GM12878 (cell line): ENCODE measurements at regions of chr3 and their contacts with region 1.

Region 1: GRCh38 chr3:127750226-127751031 is 71.9 kb downstream of the MGLL start:
- DNase-seq: peak; percentile 88
- ATAC-seq: peak; percentile 58
- H3K4me3 ChIP-seq: peak overlapping the region; percentile 48; the same call in 1 of the 2 replicates
- H3K27ac ChIP-seq: peak overlapping the region; percentile 99
- H3K4me1 ChIP-seq: peaks cover 69% of the 10 kb centered on the region
- H3K27me3 ChIP-seq: no peaks in the 10 kb centered on the region
- CTCF ChIP-seq: no peak
- EP300 ChIP-seq: peak; percentile 83 to 87
- POLR2A ChIP-seq: no peak
- RAD21 ChIP-seq: 0 out of 2 replicates have a peak, but pooled peaks have one; percentile 11

Region 2: DNA sequence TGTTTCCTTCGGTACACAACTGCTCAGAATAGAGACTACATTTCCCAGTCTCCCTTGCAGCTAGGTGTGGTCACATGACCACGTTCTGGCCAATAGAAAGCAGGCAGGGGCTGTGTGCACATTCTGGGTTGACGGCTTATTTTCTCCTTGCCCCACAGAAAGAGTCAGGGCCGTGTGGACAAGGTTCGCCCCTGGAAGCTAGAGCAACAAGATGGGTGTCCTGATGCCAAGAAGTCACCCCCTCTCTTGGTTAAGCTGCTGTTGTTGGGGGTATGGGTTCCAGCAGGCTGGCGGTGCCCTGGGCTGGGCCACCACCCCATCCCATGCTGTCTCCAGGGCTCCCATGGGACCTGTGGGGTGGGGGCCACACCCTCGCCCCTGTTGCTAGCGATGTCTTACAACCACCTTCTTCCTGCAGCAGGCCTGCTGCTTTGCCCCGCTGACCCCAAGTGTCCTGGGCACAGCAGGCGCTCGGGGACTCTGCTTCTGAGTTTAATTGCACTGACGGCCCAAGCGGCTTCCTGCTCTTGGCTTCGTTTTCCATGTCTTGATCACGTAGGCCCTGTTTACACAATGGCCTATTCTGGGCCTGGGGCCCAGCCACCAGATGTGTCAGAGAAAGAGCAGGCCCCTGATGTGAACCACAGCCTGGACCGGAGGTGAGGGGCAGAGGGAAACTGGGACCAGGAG is 52.7 kb before region 1 on chr3:
- CTCF ChIA-PET with region 1: interaction called, 5 read pairs
- POLR2A ChIA-PET with region 1: no interaction called
- RAD21 ChIA-PET with region 1: interaction called, 5 read pairs
- SMC1A ChIA-PET with region 1: interaction called, 5 read pairs
- in situ Hi-C with region 1: no loop called
- intact Hi-C with region 1: loop called (anchors 5 kb)
- DNase-seq: peak; percentile 48
- ATAC-seq: peak; percentile 94
- H3K4me3 ChIP-seq: no peak overlapping the region
- H3K27ac ChIP-seq: no peak overlapping the region; the same call in 1 of the 2 replicates
- H3K4me1 ChIP-seq: peaks cover 14% of the 10 kb centered on the region
- H3K27me3 ChIP-seq: no peaks in the 10 kb centered on the region
- CTCF ChIP-seq: no peak
- EP300 ChIP-seq: no peak
- POLR2A ChIP-seq: peak; percentile 46
- RAD21 ChIP-seq: no peak

Region 3: DNA sequence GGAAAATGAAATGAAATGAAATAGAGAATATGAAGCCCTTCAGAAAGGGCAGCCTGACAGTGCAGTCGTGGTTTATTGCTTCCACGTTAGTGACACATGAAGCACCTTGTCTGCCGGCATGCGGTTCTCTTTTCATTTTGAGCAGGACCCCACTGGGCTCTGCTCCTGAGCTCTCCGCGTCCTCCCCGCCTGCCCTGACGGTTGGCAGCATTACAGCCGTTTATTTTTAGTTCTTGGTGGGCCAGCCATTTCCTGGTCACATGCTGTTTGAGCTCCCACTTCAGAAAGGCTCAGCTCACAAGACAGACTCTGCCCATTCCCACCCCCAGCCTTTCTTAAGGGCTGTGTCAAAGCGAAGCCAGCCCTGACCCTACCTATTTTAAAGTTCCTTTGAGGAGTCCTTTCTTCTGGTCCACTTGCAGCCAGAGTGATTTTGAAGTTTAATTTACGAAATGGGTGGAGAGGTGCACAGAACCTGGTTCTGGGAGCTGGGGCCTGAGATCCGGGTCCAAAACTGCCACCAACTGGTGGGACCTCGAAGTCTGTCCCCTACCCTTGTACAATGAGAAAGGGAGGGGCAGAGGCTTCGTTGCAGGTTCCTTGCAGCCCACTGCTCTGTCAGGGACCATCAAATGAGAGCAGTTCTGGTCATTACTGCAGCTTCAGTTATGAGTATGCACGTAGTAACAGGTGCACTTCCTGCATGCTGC is 11.8 kb after region 1 on chr3:
- CTCF ChIA-PET with region 1: interaction called, 19 read pairs
- POLR2A ChIA-PET with region 1: interaction called, 116 read pairs
- RAD21 ChIA-PET with region 1: interaction called, 149 read pairs
- SMC1A ChIA-PET with region 1: interaction called, 205 read pairs
- in situ Hi-C with region 1: no loop called
- intact Hi-C with region 1: loop called (anchors 2 kb)
- DNase-seq: peak; percentile 56
- ATAC-seq: peak; percentile 75
- H3K4me3 ChIP-seq: peak overlapping the region; percentile 62
- H3K27ac ChIP-seq: peak overlapping the region; percentile 96
- H3K4me1 ChIP-seq: peaks cover 64% of the 10 kb centered on the region
- H3K27me3 ChIP-seq: no peaks in the 10 kb centered on the region
- CTCF ChIP-seq: no peak
- EP300 ChIP-seq: peak; percentile 20 to 26; a peak in 1 of 4 replicates
- POLR2A ChIP-seq: peak; percentile 69
- RAD21 ChIP-seq: peak; percentile 13; the same call in 1 of the 2 replicates

Region 4: DNA sequence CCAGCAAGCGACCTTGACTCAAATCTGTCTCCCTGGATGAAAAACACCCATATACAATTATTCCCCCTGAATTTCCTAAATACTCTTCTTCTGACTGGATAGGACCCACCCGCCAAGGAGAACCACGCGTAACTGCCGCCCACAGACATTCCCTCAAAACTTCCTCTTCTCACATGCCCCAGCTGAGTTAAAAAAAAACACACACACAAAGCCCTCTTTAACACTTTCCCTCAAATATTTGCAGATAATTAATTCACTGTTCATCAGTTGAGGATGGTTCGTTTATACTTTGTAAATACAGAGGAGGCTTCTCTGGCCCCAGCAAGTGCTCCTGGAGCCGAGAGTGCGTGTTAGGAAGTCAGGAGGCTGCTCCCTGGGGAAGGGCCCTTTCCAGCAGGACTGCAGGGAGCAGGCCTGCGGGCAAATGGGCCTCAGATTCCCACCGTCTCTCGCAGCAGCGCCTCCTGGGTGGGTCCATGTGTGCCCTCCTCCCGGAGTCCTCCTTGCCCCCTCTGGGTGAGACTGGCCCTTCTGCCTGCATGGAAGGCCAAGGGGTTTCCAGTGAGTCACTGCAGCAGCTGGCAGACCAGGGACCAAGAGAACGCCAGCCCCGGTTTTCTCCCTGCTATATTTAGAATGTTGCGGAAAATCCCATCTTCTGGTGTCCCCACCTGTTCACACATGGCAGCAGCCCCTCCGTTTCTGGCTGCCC is 25.1 kb after region 1 on chr3:
- CTCF ChIA-PET with region 1: interaction called, 4 read pairs
- POLR2A ChIA-PET with region 1: interaction called, 14 read pairs
- RAD21 ChIA-PET with region 1: interaction called, 149 read pairs
- SMC1A ChIA-PET with region 1: interaction called, 205 read pairs
- in situ Hi-C with region 1: no loop called
- intact Hi-C with region 1: no loop called
- DNase-seq: no peak
- ATAC-seq: peak; percentile 79
- H3K4me3 ChIP-seq: peak overlapping the region; percentile 19; the same call in 1 of the 2 replicates
- H3K27ac ChIP-seq: peak overlapping the region; percentile 94
- H3K4me1 ChIP-seq: peaks cover 67% of the 10 kb centered on the region
- H3K27me3 ChIP-seq: no peaks in the 10 kb centered on the region
- CTCF ChIP-seq: no peak
- EP300 ChIP-seq: peak in 1 of 2 experiments; percentile 41; a peak in 2 of 4 replicates
- POLR2A ChIP-seq: no peak
- RAD21 ChIP-seq: no peak

Region 5: DNA sequence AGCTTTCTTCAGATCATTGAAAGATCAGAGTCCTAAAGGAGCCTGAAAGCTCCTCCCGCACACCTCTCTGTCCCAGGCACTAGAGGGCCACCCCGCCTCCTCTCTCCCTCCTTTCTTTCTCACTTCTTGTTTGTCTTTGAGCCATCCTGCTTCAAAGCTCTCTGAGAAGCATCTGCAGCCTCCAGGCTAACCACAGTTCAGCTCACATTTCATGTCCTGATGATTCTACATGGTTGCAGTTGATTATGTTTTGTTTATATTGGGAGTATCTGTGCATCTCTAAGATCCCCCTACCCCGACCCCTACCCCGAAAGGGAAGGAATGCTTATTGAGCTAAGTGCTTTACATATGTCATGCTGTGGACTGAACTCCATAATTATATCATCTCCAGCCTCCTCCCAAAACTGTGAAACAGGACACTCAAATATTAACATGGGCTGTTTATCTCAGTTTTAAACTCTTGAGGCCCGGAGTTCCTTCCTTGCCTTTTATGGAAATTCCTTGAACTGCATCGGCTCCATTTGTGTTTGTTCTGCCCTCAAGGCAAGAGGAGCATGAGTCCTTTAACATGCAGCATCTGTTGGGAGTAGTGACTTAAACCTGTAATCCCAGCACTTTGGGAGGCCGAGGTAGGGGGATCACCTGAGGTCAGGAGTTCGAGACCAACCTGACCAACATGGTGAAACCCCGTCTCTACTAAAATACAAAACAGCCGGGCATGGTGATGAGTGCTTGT is 41.0 kb after region 1 on chr3:
- CTCF ChIA-PET with region 1: interaction called, 13 read pairs
- POLR2A ChIA-PET with region 1: interaction called, 7 read pairs
- RAD21 ChIA-PET with region 1: interaction called, 13 read pairs
- SMC1A ChIA-PET with region 1: interaction called, 28 read pairs
- in situ Hi-C with region 1: no loop called
- intact Hi-C with region 1: no loop called
- DNase-seq: peak; percentile 41
- ATAC-seq: peak; percentile 99
- H3K4me3 ChIP-seq: no peak overlapping the region
- H3K27ac ChIP-seq: no peak overlapping the region
- H3K4me1 ChIP-seq: peaks cover 13% of the 10 kb centered on the region
- H3K27me3 ChIP-seq: no peaks in the 10 kb centered on the region
- CTCF ChIP-seq: peak; percentile 51 to 58 (median 52); a peak in 5 of 6 replicates
- EP300 ChIP-seq: no peak
- POLR2A ChIP-seq: no peak
- RAD21 ChIP-seq: peak; percentile 68

Region 6: DNA sequence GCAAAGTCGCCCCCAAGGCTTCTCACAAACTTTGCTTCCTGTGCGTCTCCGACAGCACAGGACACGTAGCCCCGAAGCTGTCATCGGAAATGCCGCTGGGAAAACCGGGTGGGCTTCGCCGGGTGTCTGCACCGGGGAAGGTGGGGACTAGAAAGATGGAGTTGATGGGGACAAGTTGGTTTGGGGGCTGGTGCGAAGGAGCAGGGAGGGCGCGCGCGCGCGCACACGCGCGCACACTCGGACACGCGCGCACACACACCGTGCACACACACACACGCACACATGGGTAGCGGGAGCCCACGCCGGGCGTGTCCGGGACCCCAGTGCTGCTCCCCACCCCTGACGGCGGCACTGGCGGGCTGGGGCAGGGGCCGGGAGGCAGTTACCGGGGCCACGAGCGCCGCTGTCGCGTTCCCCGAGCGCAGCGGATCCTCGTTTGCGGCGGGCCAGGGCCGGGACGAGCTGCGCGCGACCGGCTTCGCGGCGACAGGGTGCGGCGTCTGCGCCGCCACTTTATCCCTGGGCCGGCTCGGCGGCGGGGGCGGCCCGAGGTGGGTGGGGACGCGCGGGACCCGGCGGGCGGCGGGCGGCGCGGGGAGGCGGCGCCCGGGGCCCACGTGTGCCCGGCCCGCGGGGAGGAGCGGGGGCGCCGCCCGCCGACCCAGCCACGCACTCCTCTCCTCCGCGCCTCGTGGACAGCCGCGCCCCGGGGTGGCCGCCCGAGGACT is 72.4 kb after region 1 on chr3:
- CTCF ChIA-PET with region 1: interaction called, 73 read pairs
- POLR2A ChIA-PET with region 1: interaction called, 26 read pairs
- RAD21 ChIA-PET with region 1: interaction called, 91 read pairs
- SMC1A ChIA-PET with region 1: interaction called, 116 read pairs
- in situ Hi-C with region 1: no loop called
- intact Hi-C with region 1: loop called (anchors 2 kb)
- DNase-seq: no peak
- ATAC-seq: peak; percentile 53
- H3K4me3 ChIP-seq: peak overlapping the region; percentile 95
- H3K27ac ChIP-seq: peak overlapping the region; percentile 76
- H3K4me1 ChIP-seq: peaks cover 7% of the 10 kb centered on the region
- H3K27me3 ChIP-seq: no peaks in the 10 kb centered on the region
- CTCF ChIP-seq: peak in 1 of 3 experiments; percentile 70; a peak in 3 of 6 replicates
- EP300 ChIP-seq: no peak
- POLR2A ChIP-seq: peak; percentile 68
- RAD21 ChIP-seq: peak; percentile 52

Region 7: DNA sequence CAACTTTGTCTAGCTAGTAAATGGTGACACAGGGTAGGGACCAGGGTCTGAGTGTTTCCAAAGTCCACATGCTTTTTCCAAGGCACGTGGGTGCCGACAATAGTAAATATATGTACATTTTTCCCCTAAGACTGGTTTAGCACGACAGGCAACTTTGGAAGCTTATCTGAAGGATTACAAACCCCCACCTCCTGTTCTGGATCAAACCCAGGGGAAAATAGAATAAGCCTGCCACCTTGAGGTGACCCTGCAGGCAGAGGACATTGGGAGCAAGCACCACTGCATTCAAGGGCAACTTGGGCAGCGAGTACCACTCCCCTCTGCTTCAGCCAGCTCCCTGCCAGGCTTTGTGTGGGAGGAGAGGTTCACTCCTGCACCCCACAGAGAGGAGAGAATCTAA is 209.4 kb after region 1 on chr3:
- CTCF ChIA-PET with region 1: interaction called, 31 read pairs
- POLR2A ChIA-PET with region 1: no interaction called
- RAD21 ChIA-PET with region 1: interaction called, 11 read pairs
- SMC1A ChIA-PET with region 1: interaction called, 33 read pairs
- in situ Hi-C with region 1: no loop called
- intact Hi-C with region 1: no loop called
- DNase-seq: no peak
- ATAC-seq: peak; percentile 82
- H3K4me3 ChIP-seq: no peak overlapping the region
- H3K27ac ChIP-seq: no peak overlapping the region
- H3K4me1 ChIP-seq: no peaks in the 10 kb centered on the region
- H3K27me3 ChIP-seq: no peaks in the 10 kb centered on the region
- CTCF ChIP-seq: peak; percentile 44 to 74 (median 49); a peak in 4 of 6 replicates
- EP300 ChIP-seq: no peak
- POLR2A ChIP-seq: no peak
- RAD21 ChIP-seq: peak; percentile 84